Activated CD4-positive, alpha-beta T cell treated with anti-CD3 and anti-CD28 coated beads for 36 hours (primary cell): ENCODE measurements at regions of chr14 and their contacts with region 1.

Region 1: GRCh38 chr14:35292051-35292769 is at the start of gene PSMA6:
- DNase-seq: peak; percentile 100
- ATAC-seq: peak; percentile 86
- H3K4me3 Mint-ChIP-seq: peak within 1 kb of the TSS; percentile 85
- H3K27ac Mint-ChIP-seq: peak within 1 kb of the TSS; percentile 96
- H3K4me1 Mint-ChIP-seq: peaks cover 52% of the 10 kb centered on the region
- H3K27me3 Mint-ChIP-seq: no peaks in the 10 kb centered on the region
- total RNA-seq, gene PSMA6: 374 to 425 TPM

Region 2: GRCh38 chr14:34539407-34540180 is 752.6 kb before region 1 on chr14 and contains the start of gene EAPP:
- CTCF ChIA-PET with region 1: no interaction called
- POLR2A ChIA-PET with region 1: no interaction called
- intact Hi-C with region 1: loop called in 1 of 2 experiments (anchors 5 kb)
- DNase-seq: peak; percentile 98
- ATAC-seq: peak; percentile 99
- H3K4me3 Mint-ChIP-seq: peak within 1 kb of the TSS; percentile 94
- H3K27ac Mint-ChIP-seq: peak within 1 kb of the TSS; percentile 95
- H3K4me1 Mint-ChIP-seq: peaks cover 33% of the 10 kb centered on the region
- H3K27me3 Mint-ChIP-seq: no peaks in the 10 kb centered on the region
- total RNA-seq, gene EAPP: 41.6 to 49.2 TPM

Region 3: DNA sequence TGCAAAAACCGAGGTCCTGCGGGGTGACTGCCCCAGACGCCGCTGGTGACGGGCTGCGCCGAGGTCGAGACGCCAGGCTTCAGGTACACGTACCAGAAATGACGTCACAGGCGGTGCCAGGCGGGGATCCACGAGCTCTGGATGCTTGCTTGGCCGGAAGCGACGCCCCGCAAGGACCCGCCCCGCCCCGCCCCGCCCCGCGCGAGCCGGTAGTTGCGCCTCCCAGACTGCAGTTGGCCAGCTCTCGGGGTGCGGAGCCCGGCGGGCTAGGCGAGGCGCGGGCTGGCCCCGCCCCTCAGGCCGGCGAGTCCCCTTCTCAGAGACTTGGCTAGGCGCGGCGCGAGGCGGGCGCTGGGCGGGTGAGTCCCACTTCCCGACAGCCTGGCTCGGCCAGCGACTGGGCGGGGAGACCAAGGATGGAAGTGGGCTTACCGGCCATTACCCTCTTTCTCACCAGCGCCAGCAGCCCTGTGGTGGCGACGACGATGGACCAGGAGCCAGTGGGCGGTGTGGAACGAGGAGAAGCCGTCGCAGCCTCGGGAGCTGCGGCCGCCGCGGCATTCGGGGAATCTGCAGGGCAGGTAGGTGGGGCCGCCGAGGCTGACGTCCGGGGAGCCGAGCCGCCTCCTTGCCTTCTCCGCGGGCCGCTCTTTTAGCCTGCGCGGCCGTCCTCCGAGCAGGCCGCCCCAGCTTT is 246.0 kb before region 1 on chr14 and contains the start of gene FAM177A1:
- CTCF ChIA-PET with region 1: interaction called, 5 read pairs
- POLR2A ChIA-PET with region 1: no interaction called
- intact Hi-C with region 1: loop called (anchors 2 to 5 kb)
- DNase-seq: peak; percentile 100
- ATAC-seq: peak; percentile 94
- H3K4me3 Mint-ChIP-seq: peak within 1 kb of the TSS; percentile 95
- H3K27ac Mint-ChIP-seq: peak within 1 kb of the TSS; percentile 99
- H3K4me1 Mint-ChIP-seq: peaks cover 23% of the 10 kb centered on the region
- H3K27me3 Mint-ChIP-seq: no peaks in the 10 kb centered on the region
- total RNA-seq, gene FAM177A1: 35.4 to 37.2 TPM

Region 4: DNA sequence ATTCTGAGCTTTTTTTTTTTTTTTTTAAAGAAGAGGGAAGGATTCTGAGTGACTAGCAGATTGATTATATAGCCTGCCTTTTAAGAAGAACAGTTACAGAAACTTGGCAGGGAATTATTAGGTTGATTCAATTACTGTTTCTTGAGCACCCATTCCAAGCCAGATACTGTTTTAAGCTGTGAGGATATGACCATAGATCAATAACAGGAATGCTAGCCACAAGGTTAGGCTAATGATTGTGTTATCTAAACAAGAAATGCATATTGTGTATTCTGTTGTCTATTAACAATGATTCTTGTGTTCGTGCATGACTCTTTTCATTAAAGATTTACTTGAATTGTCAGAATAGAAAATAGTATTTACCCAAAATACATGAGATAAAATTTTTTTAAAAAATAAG is 102.8 kb before region 1 on chr14:
- CTCF ChIA-PET with region 1: no interaction called
- POLR2A ChIA-PET with region 1: no interaction called
- intact Hi-C with region 1: no loop called
- DNase-seq: no peak
- ATAC-seq: no peak
- H3K4me3 Mint-ChIP-seq: no peak overlapping the region
- H3K27ac Mint-ChIP-seq: no peak overlapping the region
- H3K4me1 Mint-ChIP-seq: peaks cover 8% of the 10 kb centered on the region
- H3K27me3 Mint-ChIP-seq: no peaks in the 10 kb centered on the region

Region 5: DNA sequence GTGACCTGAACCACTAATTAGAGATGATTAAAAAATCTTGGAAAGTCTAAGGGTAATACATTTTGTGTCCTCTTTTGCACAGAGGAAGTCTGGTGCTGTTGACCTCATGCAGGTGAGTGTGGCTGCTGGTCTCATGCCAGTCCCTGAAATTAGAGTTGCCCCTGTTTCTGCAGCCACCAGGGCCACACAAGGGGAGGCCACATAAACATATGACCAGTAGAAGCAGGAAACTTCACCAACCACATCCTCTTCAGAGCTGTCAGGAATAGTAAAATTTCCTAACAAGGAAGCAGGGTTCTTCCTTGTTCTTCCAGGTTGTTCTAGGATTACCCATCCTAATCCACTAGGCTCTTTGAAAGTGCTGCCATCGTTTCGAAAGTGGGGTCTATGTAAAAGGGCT is 28.3 kb after region 1 on chr14:
- CTCF ChIA-PET with region 1: interaction called, 14 read pairs
- POLR2A ChIA-PET with region 1: interaction called, 18 read pairs
- intact Hi-C with region 1: loop called in 1 of 2 experiments (anchors 2 kb)
- DNase-seq: no peak
- ATAC-seq: peak; percentile 23
- H3K4me3 Mint-ChIP-seq: no peak overlapping the region
- H3K27ac Mint-ChIP-seq: no peak overlapping the region
- H3K4me1 Mint-ChIP-seq: no peaks in the 10 kb centered on the region
- H3K27me3 Mint-ChIP-seq: no peaks in the 10 kb centered on the region

Region 6: GRCh38 chr14:35355981-35356841 is 64.0 kb after region 1 on chr14:
- CTCF ChIA-PET with region 1: interaction called, 7 read pairs
- POLR2A ChIA-PET with region 1: interaction called, 9 read pairs
- intact Hi-C with region 1: loop called (anchors 1 kb)
- DNase-seq: peak; percentile 79
- ATAC-seq: peak; percentile 85
- H3K4me3 Mint-ChIP-seq: peak overlapping the region; percentile 30
- H3K27ac Mint-ChIP-seq: peak overlapping the region; percentile 91
- H3K4me1 Mint-ChIP-seq: peaks cover 46% of the 10 kb centered on the region
- H3K27me3 Mint-ChIP-seq: no peaks in the 10 kb centered on the region

Region 7: GRCh38 chr14:35576260-35576659 is 284.1 kb after region 1 on chr14:
- CTCF ChIA-PET with region 1: no interaction called
- POLR2A ChIA-PET with region 1: no interaction called
- intact Hi-C with region 1: no loop called
- DNase-seq: no peak
- ATAC-seq: no peak
- H3K4me3 Mint-ChIP-seq: no peak overlapping the region
- H3K27ac Mint-ChIP-seq: no peak overlapping the region
- H3K4me1 Mint-ChIP-seq: no peaks in the 10 kb centered on the region
- H3K27me3 Mint-ChIP-seq: no peaks in the 10 kb centered on the region

Region 8: GRCh38 chr14:35826218-35826951 is 534.2 kb after region 1 on chr14 and contains the start of gene BRMS1L:
- CTCF ChIA-PET with region 1: no interaction called
- POLR2A ChIA-PET with region 1: no interaction called
- intact Hi-C with region 1: loop called in 1 of 2 experiments (anchors 1 kb)
- DNase-seq: peak; percentile 99
- ATAC-seq: peak; percentile 98
- H3K4me3 Mint-ChIP-seq: peak within 1 kb of the TSS; percentile 71
- H3K27ac Mint-ChIP-seq: peak within 1 kb of the TSS; percentile 90
- H3K4me1 Mint-ChIP-seq: peaks cover 24% of the 10 kb centered on the region
- H3K27me3 Mint-ChIP-seq: no peaks in the 10 kb centered on the region
- total RNA-seq, gene BRMS1L: 5.3 to 7.8 TPM